HEK293T (cell line): ENCODE measurements at regions of chr1 and their contacts with region 1.

Region 1: GRCh38 chr1:84944767-84945486 is 51.9 kb upstream of the LPAR3 start:
- DNase-seq: peak; percentile 83

Region 2: GRCh38 chr1:84959294-84959693 is 14.4 kb after region 1 on chr1:
- CTCF ChIA-PET with region 1: interaction called, 15 read pairs
- POLR2A ChIA-PET with region 1: no interaction called
- DNase-seq: no peak

Region 3: DNA sequence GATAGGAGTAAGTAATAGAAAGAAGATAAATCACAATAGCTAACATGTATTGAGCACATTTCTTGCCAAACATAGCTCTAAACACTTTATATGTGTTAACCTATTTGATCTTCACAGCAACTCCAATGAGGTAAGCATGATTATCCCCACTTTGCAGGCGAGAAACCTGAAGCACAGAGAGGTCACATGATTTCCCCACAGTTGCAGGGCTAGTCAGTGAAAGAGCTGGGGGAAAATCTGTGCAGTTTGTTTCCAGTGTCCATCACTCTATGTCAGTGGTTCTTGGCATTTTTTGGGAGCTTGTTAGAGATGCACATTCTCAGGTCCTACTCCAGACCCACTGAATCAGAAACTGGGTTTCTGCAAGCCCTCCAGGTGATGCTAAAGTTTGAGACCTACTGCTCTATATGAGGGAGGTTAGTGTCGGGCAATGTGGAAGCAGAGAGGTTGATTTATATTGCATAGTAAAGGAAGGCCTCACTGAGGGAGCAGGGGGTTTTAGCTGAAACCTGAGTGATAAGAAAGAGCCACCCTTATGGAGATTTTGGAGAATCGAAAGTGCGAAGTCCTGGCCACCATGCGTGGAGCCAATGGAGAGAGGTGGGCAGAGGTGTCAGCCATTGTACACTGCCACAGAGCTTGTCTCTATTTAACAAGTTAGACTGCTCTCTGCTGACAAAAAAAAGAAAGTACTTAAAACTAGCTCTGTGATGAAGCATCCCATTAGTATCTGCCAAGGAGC is 82.5 kb after region 1 on chr1:
- CTCF ChIA-PET with region 1: interaction called, 18 read pairs
- POLR2A ChIA-PET with region 1: no interaction called
- DNase-seq: no peak